ENCODE measurements at regions of chrX and their contacts with region 1.

Region 1: GRCh38 chrX:68807818-68808217 is 21.0 kb upstream of the EFNB1 start:
- DNase-seq: peak in 2 of 4 experiments; percentile 31 to 47
- ATAC-seq: peak; percentile 85
- H3K4me3 ChIP-seq: no peak overlapping the region
- H3K27ac ChIP-seq: no peak overlapping the region
- H3K4me1 ChIP-seq: no peaks in the 10 kb centered on the region
- H3K27me3 ChIP-seq: no peaks in the 10 kb centered on the region
- CTCF ChIP-seq: peak; percentile 36 to 58 (median 46); a peak in 5 of 6 replicates
- EP300 ChIP-seq: no peak
- POLR2A ChIP-seq: no peak
- RAD21 ChIP-seq: peak; percentile 44 to 71; a peak in 3 of 4 replicates

Region 2: GRCh38 chrX:68710870-68711576 is 96.8 kb before region 1 on chrX:
- CTCF ChIA-PET with region 1: no interaction called
- POLR2A ChIA-PET with region 1: no interaction called
- in situ Hi-C with region 1: no loop called
- intact Hi-C with region 1: no loop called
- DNase-seq: peak; percentile 41 to 55 (median 42)
- ATAC-seq: peak; percentile 88
- H3K4me3 ChIP-seq: no peak overlapping the region
- H3K27ac ChIP-seq: no peak overlapping the region; the same call in 2 of the 3 replicates
- H3K4me1 ChIP-seq: no peaks in the 10 kb centered on the region; a peak in 2 of 5 replicates
- H3K27me3 ChIP-seq: no peaks in the 10 kb centered on the region
- CTCF ChIP-seq: peak; percentile 48 to 66 (median 58)
- EP300 ChIP-seq: no peak
- POLR2A ChIP-seq: no peak
- RAD21 ChIP-seq: peak; percentile 37 to 67

Region 3: DNA sequence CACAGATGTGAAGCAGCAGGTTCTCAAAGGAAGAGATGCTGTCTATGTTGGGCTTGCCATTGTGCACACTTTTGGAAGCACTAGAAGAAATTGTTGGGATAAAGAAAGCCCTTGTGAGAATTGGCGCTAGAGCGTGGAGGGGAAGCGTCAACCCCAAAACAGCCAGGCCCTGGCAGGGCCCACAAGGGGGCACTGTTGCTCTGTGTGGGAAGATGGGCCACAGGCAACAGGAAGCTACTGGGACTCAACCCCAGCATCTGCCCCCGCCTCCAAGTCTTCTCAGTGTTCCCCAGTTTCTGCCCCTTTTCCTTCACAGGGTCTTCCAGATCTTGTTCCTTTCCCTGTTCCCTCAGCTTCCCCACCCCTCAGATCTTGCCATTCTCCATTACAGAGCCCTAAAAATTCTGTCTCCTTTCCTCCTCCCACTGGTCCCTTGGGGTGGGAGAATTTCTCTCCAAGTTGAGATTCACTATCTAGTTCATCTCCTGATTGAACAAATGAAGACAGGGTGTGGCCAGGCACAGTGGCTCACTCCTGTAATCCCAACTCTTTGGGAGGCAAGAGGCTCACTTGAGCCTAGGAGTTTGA is 74.8 kb before region 1 on chrX:
- CTCF ChIA-PET with region 1: interaction called, 8 read pairs
- POLR2A ChIA-PET with region 1: no interaction called
- in situ Hi-C with region 1: no loop called
- intact Hi-C with region 1: loop called (anchors 1 kb)
- DNase-seq: peak; percentile 70 to 76 (median 74)
- ATAC-seq: peak; percentile 98
- H3K4me3 ChIP-seq: no peak overlapping the region
- H3K27ac ChIP-seq: no peak overlapping the region
- H3K4me1 ChIP-seq: no peaks in the 10 kb centered on the region
- H3K27me3 ChIP-seq: no peaks in the 10 kb centered on the region
- CTCF ChIP-seq: peak; percentile 79 to 86 (median 82)
- EP300 ChIP-seq: no peak
- POLR2A ChIP-seq: no peak
- RAD21 ChIP-seq: peak; percentile 50 to 83

Region 4: GRCh38 chrX:69109683-69110082 is 301.9 kb after region 1 on chrX:
- CTCF ChIA-PET with region 1: no interaction called
- POLR2A ChIA-PET with region 1: no interaction called
- in situ Hi-C with region 1: no loop called
- intact Hi-C with region 1: no loop called
- DNase-seq: peak; percentile 23 to 45 (median 32)
- ATAC-seq: peak; percentile 37; the same call in 1 of the 3 replicates
- H3K4me3 ChIP-seq: no peak overlapping the region
- H3K27ac ChIP-seq: no peak overlapping the region
- H3K4me1 ChIP-seq: peaks cover 24 to 27% of the 10 kb centered on the region in 2 experiments; a peak in 4 of 5 replicates
- H3K27me3 ChIP-seq: no peaks in the 10 kb centered on the region
- CTCF ChIP-seq: no peak
- EP300 ChIP-seq: no peak
- POLR2A ChIP-seq: no peak
- RAD21 ChIP-seq: no peak

Measured in K562 (cell line).